Mammary epithelial cell (primary cell): ENCODE measurements at regions of chr1 and their contacts with region 1.

Region 1: GRCh38 chr1:10027027-10027426 is 5.7 kb upstream of the UBE4B start:
- DNase-seq: no peak
- H3K4me3 ChIP-seq: no peak overlapping the region
- H3K27ac ChIP-seq: no peak overlapping the region
- H3K4me1 ChIP-seq: no peaks in the 10 kb centered on the region
- H3K27me3 ChIP-seq: no peaks in the 10 kb centered on the region
- CTCF ChIP-seq: no peak

Region 2: DNA sequence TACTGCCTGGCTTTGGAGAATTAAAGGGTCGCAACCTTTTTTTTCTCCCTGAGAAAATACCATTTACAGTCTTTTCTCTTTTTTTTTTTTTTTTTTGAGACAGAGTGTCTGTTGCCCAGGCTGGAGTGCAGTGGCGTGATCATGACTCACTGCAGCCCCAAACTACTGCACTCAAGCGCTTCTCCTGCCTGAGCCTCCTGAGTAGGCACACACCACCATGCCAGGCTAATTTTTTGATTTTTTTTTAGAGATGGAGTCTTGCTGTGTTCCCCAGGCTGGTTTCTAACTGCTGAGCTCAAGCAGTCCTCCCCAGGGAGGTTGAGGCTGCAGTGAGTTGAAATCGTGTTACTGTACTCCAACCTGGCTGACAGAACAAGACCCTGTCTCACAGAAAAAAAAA is 30.3 kb after region 1 on chr1:
- CTCF ChIA-PET with region 1: no interaction called
- dilution Hi-C with region 1: no loop called
- in situ Hi-C with region 1: no loop called
- intact Hi-C with region 1: no loop called
- DNase-seq: no peak
- H3K4me3 ChIP-seq: no peak overlapping the region
- H3K27ac ChIP-seq: no peak overlapping the region
- H3K4me1 ChIP-seq: peaks cover 14% of the 10 kb centered on the region
- H3K27me3 ChIP-seq: no peaks in the 10 kb centered on the region
- CTCF ChIP-seq: no peak

Region 3: DNA sequence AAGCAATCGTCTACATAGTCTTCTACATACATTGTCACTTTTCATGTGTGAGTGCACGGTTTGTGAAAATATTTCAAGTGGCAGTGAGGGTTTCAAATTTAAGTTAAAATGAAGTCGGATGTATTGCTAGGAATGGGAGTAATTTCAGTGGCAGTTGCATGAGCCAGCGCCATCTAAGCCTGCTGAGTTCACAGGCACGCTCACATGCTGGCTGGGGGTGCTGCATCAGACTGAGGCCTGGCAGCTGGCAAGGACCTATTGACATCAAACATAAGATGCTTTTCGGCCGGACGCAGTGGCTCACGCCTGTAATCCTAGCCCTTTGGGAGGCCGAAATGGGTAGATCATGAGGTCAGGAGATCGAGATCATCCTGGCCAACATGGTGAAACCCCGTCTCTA is 86.5 kb after region 1 on chr1:
- CTCF ChIA-PET with region 1: no interaction called
- dilution Hi-C with region 1: loop called (anchors 5 kb)
- in situ Hi-C with region 1: no loop called
- intact Hi-C with region 1: loop called (anchors 2 kb)
- DNase-seq: no peak
- H3K4me3 ChIP-seq: no peak overlapping the region
- H3K27ac ChIP-seq: no peak overlapping the region
- H3K4me1 ChIP-seq: peaks cover 8% of the 10 kb centered on the region
- H3K27me3 ChIP-seq: no peaks in the 10 kb centered on the region
- CTCF ChIP-seq: no peak